ENCODE measurements at regions of chr18 and their contacts with region 1.

Region 1: GRCh38 chr18:3966985-3967856 is 487.9 kb downstream of the DLGAP1 start:
- DNase-seq: peak in 1 of 2 donors; percentile 53
- ATAC-seq: peak; percentile 72 to 97 (median 92)
- H3K4me3 ChIP-seq: no peak overlapping the region
- H3K27ac ChIP-seq: peak overlapping the region in 7 of 10 donors; percentile 28 to 84 (median 72)
- H3K4me1 ChIP-seq: peaks cover 0 to 29% (median 4%) of the 10 kb centered on the region in 9 donors
- H3K27me3 ChIP-seq: no peaks in the 10 kb centered on the region
- CTCF ChIP-seq: peak in 1 of 9 donors; percentile 5

Region 2: GRCh38 chr18:3869848-3870247 is 97.4 kb before region 1 on chr18:
- intact Hi-C with region 1: loop called in 3 of 10 experiments (anchors 5 to 10 kb)
- DNase-seq: no peak
- ATAC-seq: peak in 5 of 8 donors; percentile 33 to 79 (median 61)
- H3K4me3 ChIP-seq: no peak overlapping the region
- H3K27ac ChIP-seq: no peak overlapping the region
- H3K4me1 ChIP-seq: peaks cover 0 to 26% (median 4%) of the 10 kb centered on the region in 9 donors
- H3K27me3 ChIP-seq: no peaks in the 10 kb centered on the region
- CTCF ChIP-seq: peak; percentile 11 to 64 (median 49)

Region 3: DNA sequence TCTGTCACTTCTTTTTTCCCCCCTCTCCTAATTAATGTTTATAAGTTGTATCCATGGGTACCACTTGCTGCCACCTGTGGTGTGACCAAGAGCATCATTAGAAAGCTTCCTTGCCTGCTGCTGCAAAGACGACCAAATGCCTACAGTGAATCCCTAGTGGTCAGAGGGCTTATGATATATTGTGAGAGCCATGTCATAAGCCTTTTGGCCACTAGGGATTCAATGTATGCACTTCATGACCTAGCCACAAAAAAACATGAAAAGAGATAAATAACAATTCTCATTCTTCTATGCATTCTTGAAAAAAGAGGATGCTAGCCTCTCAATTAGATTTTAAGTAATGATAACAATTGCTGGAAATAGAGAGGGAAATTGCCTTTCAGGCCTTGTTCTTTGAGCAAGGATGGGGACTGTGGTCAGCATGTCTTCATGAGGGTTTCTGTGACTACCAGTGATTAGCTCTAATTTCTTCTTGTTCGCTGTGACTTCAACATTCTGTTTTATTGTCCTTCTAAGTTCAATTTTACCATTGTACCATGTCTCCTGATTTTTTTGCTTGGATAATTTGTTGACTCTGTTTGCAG is 81.9 kb before region 1 on chr18:
- intact Hi-C with region 1: no loop called
- DNase-seq: no peak
- ATAC-seq: no peak
- H3K4me3 ChIP-seq: no peak overlapping the region
- H3K27ac ChIP-seq: no peak overlapping the region
- H3K4me1 ChIP-seq: peaks cover 0 to 45% (median 16%) of the 10 kb centered on the region in 9 donors
- H3K27me3 ChIP-seq: no peaks in the 10 kb centered on the region
- CTCF ChIP-seq: peak in 2 of 9 donors; percentile 15 to 18

Region 4: DNA sequence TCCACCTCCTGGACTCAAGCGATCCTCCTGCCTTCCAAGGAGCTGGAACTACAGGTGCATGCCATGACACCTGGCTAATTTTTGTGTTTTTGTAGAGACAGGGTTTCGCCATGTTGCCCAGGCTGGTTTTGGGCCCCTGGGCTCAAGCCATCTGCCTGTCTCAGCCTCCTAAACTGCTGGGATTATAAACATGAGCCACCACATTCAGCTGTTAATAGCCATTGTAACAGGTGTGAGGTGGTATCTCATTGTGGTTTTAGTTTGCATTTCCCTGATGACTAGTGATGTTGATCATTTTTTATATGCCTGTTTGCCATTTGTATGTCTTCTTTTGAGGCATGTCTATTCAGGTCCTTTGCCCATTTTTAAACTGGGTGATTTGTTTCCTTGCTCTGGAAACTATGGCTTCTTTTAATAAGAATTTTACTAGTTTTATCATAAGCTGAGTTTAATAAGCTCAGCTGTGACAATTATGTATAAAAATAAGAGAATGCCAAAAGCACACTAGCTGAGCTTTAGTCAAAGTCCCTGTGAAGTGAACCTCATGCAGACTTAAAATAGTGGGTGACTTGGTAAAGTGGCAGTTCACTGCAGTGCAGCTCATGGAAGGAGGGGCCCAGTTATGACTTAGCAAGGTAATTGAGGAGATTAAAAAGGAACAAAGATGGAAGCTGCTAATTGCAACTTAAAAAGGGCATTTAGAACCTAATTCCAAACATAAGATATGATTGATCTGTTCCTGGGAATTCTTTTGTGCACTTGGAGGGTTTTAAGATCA is 52.2 kb before region 1 on chr18:
- intact Hi-C with region 1: loop called in 1 of 10 experiments (anchors 5 kb)
- DNase-seq: no peak
- ATAC-seq: peak in 2 of 8 donors; percentile 46 to 60
- H3K4me3 ChIP-seq: peak overlapping the region in 1 of 10 donors; percentile 18
- H3K27ac ChIP-seq: peak overlapping the region in 1 of 10 donors; percentile 12
- H3K4me1 ChIP-seq: peaks cover 0 to 77% (median 21%) of the 10 kb centered on the region in 9 donors
- H3K27me3 ChIP-seq: no peaks in the 10 kb centered on the region
- CTCF ChIP-seq: no peak

Region 5: GRCh38 chr18:4060427-4061281 is 93.4 kb after region 1 on chr18:
- intact Hi-C with region 1: no loop called
- DNase-seq: no peak
- ATAC-seq: no peak
- H3K4me3 ChIP-seq: no peak overlapping the region
- H3K27ac ChIP-seq: no peak overlapping the region
- H3K4me1 ChIP-seq: no peaks in the 10 kb centered on the region
- H3K27me3 ChIP-seq: no peaks in the 10 kb centered on the region
- CTCF ChIP-seq: no peak

Measured in heart right ventricle (tissue), 16 donors.